T-cell (primary cell): ENCODE measurements at regions of chr6 and their contacts with region 1.

Region 1: GRCh38 chr6:125790358-125791150 is at the start of gene NCOA7:
- DNase-seq: peak; percentile 60 to 85 (median 76)
- ATAC-seq: peak; percentile 84 to 89 (median 86)
- H3K4me3 ChIP-seq: peak within 1 kb of the TSS; percentile 83 to 85
- H3K4me3 Mint-ChIP-seq: peak within 1 kb of the TSS; percentile 90 to 95 (median 93)
- H3K27ac ChIP-seq: peak within 1 kb of the TSS; percentile 93
- H3K27ac Mint-ChIP-seq: peak within 1 kb of the TSS; percentile 99
- H3K4me1 ChIP-seq: peaks cover 15 to 21% of the 10 kb centered on the region in 2 experiments
- H3K4me1 Mint-ChIP-seq: peaks cover 56 to 59% (median 58%) of the 10 kb centered on the region in 3 donors
- H3K27me3 ChIP-seq: no peaks in the 10 kb centered on the region
- H3K27me3 Mint-ChIP-seq: no peaks in the 10 kb centered on the region
- total RNA-seq, gene NCOA7: 40.3 to 51.6 (median 46.4) TPM

Region 2: GRCh38 chr6:125749173-125749864 is 41.2 kb before region 1 on chr6 and contains the start of gene HEY2:
- CTCF ChIA-PET with region 1: interaction called, 4 to 6 read pairs
- POLR2A ChIA-PET with region 1: interaction called in 1 of 2 experiments, 12 read pairs
- DNase-seq: peak; percentile 41 to 88 (median 62)
- ATAC-seq: peak; percentile 74 to 84 (median 82)
- H3K4me3 ChIP-seq: peak within 1 kb of the TSS; percentile 60 to 86
- H3K4me3 Mint-ChIP-seq: peak within 1 kb of the TSS; percentile 85 to 92 (median 89)
- H3K27ac ChIP-seq: no peak within 1 kb of the TSS
- H3K27ac Mint-ChIP-seq: peak within 1 kb of the TSS; percentile 23 to 57
- H3K4me1 ChIP-seq: peaks cover 12 to 34% of the 10 kb centered on the region in 2 experiments
- H3K4me1 Mint-ChIP-seq: peaks cover 35 to 47% (median 37%) of the 10 kb centered on the region in 3 donors
- H3K27me3 ChIP-seq: peaks cover 6 to 34% of the 10 kb centered on the region in 2 experiments
- H3K27me3 Mint-ChIP-seq: peaks cover 28 to 61% of the 10 kb centered on the region in 2 donors
- total RNA-seq, gene HEY2: 0.16 to 0.32 (median 0.24) TPM in 4 of 5 donors, not detected in the other

Region 3: DNA sequence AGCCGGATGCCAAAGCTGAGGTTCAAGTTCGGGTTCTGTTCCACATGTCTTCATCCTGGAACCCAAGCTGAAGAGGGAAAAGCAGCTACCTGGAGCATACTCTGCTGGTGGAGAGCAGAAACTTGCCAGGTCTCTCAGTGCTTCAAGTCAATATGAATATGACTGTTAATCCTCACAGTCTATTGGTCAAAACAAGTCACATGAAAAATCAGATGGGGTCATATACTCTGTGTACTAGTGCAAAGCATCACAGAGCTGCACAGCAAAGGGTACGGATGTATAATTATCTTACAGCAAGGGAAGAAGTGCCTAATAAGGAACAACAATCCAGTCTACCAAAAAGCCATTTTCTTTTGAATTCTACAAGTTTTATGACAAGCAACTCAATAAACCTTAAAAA is 11.8 kb after region 1 on chr6:
- CTCF ChIA-PET with region 1: interaction called, 6 to 14 read pairs
- POLR2A ChIA-PET with region 1: interaction called in 1 of 2 experiments, 7 read pairs
- DNase-seq: no peak
- ATAC-seq: no peak
- H3K4me3 ChIP-seq: no peak overlapping the region
- H3K4me3 Mint-ChIP-seq: no peak overlapping the region
- H3K27ac ChIP-seq: peak overlapping the region; percentile 32
- H3K27ac Mint-ChIP-seq: peak overlapping the region in 1 of 2 donors; percentile 50
- H3K4me1 ChIP-seq: peaks cover 5 to 6% of the 10 kb centered on the region in 2 experiments
- H3K4me1 Mint-ChIP-seq: peaks cover 51 to 73% (median 63%) of the 10 kb centered on the region in 3 donors
- H3K27me3 ChIP-seq: no peaks in the 10 kb centered on the region
- H3K27me3 Mint-ChIP-seq: no peaks in the 10 kb centered on the region

Region 4: DNA sequence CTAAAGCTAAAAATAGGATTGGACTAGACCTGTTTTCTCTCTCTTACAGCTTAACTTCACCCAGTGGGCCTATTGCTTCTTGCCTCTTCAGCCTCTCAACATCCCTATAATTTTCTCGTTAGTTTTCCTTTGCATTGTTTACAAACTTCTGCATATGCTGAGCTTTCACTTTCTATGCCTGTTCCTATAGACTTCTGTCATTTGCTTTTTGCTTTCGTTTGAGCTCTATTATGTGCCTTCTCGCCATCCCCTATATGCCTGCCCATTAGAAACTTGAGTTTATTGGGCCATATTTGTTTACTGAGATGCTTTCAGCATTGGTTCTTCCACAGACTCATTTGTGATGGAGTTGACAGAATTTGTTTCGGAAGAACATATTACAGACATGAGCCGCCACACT is 41.1 kb after region 1 on chr6:
- CTCF ChIA-PET with region 1: interaction called, 3 to 18 read pairs
- POLR2A ChIA-PET with region 1: interaction called in 1 of 2 experiments, 3 read pairs
- DNase-seq: peak in 7 of 35 experiments; percentile 5 to 23 (median 18)
- ATAC-seq: no peak
- H3K4me3 ChIP-seq: peak overlapping the region in 1 of 2 donors; percentile 29
- H3K4me3 Mint-ChIP-seq: peak overlapping the region; percentile 36 to 75 (median 52)
- H3K27ac ChIP-seq: peak overlapping the region; percentile 71
- H3K27ac Mint-ChIP-seq: peak overlapping the region; percentile 91 to 96
- H3K4me1 ChIP-seq: peaks cover 25 to 43% of the 10 kb centered on the region in 2 experiments
- H3K4me1 Mint-ChIP-seq: peaks cover 71 to 84% (median 83%) of the 10 kb centered on the region in 3 donors
- H3K27me3 ChIP-seq: no peaks in the 10 kb centered on the region
- H3K27me3 Mint-ChIP-seq: no peaks in the 10 kb centered on the region

Region 5: GRCh38 chr6:125956506-125957390 is 166.2 kb after region 1 on chr6 and contains the start of gene HINT3:
- CTCF ChIA-PET with region 1: interaction called, 4 to 68 read pairs
- POLR2A ChIA-PET with region 1: interaction called, 3 to 6 read pairs
- DNase-seq: peak; percentile 93 to 99 (median 97)
- ATAC-seq: peak; percentile 88 to 94 (median 91)
- H3K4me3 ChIP-seq: peak within 1 kb of the TSS; percentile 61 to 92
- H3K4me3 Mint-ChIP-seq: peak within 1 kb of the TSS in 1 of 3 donors; percentile 60
- H3K27ac ChIP-seq: peak within 1 kb of the TSS; percentile 98
- H3K27ac Mint-ChIP-seq: peak within 1 kb of the TSS in 1 of 2 donors; percentile 86
- H3K4me1 ChIP-seq: peaks cover 8 to 18% of the 10 kb centered on the region in 2 experiments
- H3K4me1 Mint-ChIP-seq: peaks cover 0 to 19% (median 14%) of the 10 kb centered on the region in 3 donors
- H3K27me3 ChIP-seq: peaks cover 0 to 3% of the 10 kb centered on the region in 2 experiments
- H3K27me3 Mint-ChIP-seq: peaks cover 0 to 6% of the 10 kb centered on the region in 2 donors
- total RNA-seq, gene HINT3: 8.5 to 11.7 (median 10.5) TPM